ENCODE measurements at regions of chr17 and their contacts with region 1.

Region 1: DNA sequence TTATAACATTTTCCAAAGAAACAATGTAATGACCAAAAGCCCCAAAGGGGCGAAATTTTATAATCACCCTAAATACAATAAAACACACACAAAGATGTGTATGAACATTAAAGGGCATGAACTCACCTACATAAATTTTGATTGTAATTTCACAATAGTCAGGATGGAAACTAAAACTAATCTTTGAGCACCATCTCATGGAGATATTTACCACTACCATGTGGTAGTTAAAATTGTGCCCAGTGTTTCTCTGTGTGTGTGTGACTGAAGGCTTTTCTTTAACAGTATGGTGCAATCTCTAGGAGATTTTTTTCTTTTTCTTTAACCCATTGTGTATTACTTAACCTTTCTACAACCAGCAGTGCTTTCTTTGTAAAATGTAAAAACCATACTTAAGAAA is 19.7 kb upstream of the MEIOC start:
- DNase-seq: no peak
- ATAC-seq: peak; percentile 57

Region 2: GRCh38 chr17:44533533-44534246 is 102.9 kb before region 1 on chr17:
- intact Hi-C with region 1: loop called (anchors 1 kb)
- DNase-seq: peak; percentile 93
- ATAC-seq: peak; percentile 96

Region 3: DNA sequence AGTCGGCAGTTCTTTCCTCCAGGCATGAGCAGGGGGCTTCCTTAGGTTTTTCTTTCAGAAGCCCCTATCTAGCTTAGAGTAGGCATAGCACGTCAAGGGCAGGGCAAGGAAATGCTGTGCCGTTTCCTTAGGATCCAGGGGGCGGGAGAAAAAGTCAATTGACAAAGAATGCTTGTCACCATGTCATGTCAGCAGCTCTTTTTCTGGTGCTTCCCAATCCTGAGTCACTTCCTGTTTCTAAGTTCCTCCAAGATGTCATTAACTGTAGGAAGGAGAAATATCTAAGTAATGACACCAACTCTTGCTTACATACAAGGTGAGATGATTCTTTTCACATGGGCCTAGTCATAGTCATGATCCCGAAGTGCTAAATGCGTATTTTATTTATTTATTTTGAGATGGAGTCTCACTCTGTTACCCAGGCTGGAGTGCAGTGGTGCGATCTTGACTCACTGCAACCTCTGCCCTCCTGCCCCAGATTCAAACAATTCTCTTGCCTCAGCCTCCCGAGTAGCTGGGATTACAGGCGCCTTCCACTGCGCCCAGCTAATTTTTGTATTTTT is 158.4 kb after region 1 on chr17:
- intact Hi-C with region 1: no loop called
- DNase-seq: peak; percentile 22
- ATAC-seq: peak; percentile 40

Region 4: GRCh38 chr17:44820631-44821212 is 184.2 kb after region 1 on chr17:
- intact Hi-C with region 1: no loop called
- DNase-seq: no peak
- ATAC-seq: no peak

Measured in Right ventricle myocardium superior (tissue), 1 donor.